Ascending aorta (tissue), 2 donors: ENCODE measurements at regions of chr20 and their contacts with region 1.

Region 1: GRCh38 chr20:44310664-44311639 is at the start of gene FITM2:
- DNase-seq: peak; percentile 89 to 99
- H3K4me3 ChIP-seq: peak within 1 kb of the TSS; percentile 85 to 100
- H3K27ac ChIP-seq: peak within 1 kb of the TSS; percentile 50 to 68
- H3K4me1 ChIP-seq: peaks cover 4 to 9% of the 10 kb centered on the region in 2 donors
- H3K27me3 ChIP-seq: no peaks in the 10 kb centered on the region
- CTCF ChIP-seq: peak; percentile 87 to 98 (median 96)
- total RNA-seq, gene FITM2: 5.3 TPM

Region 2: GRCh38 chr20:43456809-43457639 is 853.9 kb before region 1 on chr20:
- intact Hi-C with region 1: loop called (anchors 5 kb)
- DNase-seq: peak; percentile 78 to 96
- H3K4me3 ChIP-seq: peak overlapping the region; percentile 90 to 91
- H3K27ac ChIP-seq: peak overlapping the region; percentile 99 to 100
- H3K4me1 ChIP-seq: peaks cover 4 to 17% of the 10 kb centered on the region in 2 donors
- H3K27me3 ChIP-seq: no peaks in the 10 kb centered on the region
- CTCF ChIP-seq: no peak

Region 3: GRCh38 chr20:44115762-44116644 is 194.9 kb before region 1 on chr20:
- intact Hi-C with region 1: loop called (anchors 2 kb)
- DNase-seq: peak in 1 of 2 donors; percentile 58
- H3K4me3 ChIP-seq: no peak overlapping the region
- H3K27ac ChIP-seq: peak overlapping the region in 1 of 2 donors; percentile 14
- H3K4me1 ChIP-seq: peaks cover 5 to 13% of the 10 kb centered on the region in 2 donors
- H3K27me3 ChIP-seq: no peaks in the 10 kb centered on the region
- CTCF ChIP-seq: no peak

Region 4: DNA sequence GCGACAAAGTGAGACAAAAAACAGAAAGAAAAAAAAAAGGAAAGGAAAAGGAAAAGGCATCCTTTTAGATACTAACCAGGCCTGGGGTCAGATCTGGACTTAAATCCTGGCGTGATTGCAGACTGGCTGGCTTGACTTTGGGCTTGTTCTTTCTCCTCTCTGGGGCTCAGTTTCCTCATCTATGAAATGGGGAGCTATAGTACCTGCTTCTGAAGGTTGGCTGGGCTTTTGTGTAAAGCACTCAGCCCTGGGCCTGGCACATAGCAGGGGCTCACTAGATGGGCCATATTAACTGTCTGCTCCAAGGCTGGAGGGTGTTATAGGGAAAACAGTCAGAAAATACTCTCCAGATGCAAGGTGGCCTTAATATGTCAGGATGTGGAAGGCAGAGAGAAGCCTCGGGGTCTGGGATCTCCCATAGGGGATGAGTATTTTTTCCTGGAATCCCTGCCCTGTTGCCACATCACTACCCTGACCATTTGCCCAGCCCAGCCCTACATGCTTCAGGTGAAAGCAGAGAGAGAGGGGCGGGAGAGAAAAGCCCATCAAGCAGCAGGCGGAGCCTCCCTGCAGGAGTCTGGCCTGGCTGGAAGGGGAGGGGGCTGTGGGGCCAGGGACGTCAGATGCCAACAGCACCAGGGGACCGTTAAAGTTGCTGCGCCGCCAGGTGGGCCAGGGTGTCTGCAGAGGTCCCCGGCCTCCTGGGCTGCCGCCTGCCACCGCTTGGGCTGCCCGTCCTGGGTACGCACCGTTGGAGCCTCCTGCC is 24.9 kb after region 1 on chr20:
- intact Hi-C with region 1: no loop called
- DNase-seq: no peak
- H3K4me3 ChIP-seq: no peak overlapping the region
- H3K27ac ChIP-seq: no peak overlapping the region
- H3K4me1 ChIP-seq: no peaks in the 10 kb centered on the region
- H3K27me3 ChIP-seq: no peaks in the 10 kb centered on the region
- CTCF ChIP-seq: no peak

Region 5: GRCh38 chr20:44609511-44610312 is 298.8 kb after region 1 on chr20:
- intact Hi-C with region 1: loop called (anchors 10 kb)
- DNase-seq: peak in 1 of 2 donors; percentile 95
- H3K4me3 ChIP-seq: peak overlapping the region; percentile 15 to 51
- H3K27ac ChIP-seq: peak overlapping the region; percentile 83 to 88
- H3K4me1 ChIP-seq: peaks cover 5 to 20% of the 10 kb centered on the region in 2 donors
- H3K27me3 ChIP-seq: no peaks in the 10 kb centered on the region
- CTCF ChIP-seq: peak; percentile 98

Region 6: DNA sequence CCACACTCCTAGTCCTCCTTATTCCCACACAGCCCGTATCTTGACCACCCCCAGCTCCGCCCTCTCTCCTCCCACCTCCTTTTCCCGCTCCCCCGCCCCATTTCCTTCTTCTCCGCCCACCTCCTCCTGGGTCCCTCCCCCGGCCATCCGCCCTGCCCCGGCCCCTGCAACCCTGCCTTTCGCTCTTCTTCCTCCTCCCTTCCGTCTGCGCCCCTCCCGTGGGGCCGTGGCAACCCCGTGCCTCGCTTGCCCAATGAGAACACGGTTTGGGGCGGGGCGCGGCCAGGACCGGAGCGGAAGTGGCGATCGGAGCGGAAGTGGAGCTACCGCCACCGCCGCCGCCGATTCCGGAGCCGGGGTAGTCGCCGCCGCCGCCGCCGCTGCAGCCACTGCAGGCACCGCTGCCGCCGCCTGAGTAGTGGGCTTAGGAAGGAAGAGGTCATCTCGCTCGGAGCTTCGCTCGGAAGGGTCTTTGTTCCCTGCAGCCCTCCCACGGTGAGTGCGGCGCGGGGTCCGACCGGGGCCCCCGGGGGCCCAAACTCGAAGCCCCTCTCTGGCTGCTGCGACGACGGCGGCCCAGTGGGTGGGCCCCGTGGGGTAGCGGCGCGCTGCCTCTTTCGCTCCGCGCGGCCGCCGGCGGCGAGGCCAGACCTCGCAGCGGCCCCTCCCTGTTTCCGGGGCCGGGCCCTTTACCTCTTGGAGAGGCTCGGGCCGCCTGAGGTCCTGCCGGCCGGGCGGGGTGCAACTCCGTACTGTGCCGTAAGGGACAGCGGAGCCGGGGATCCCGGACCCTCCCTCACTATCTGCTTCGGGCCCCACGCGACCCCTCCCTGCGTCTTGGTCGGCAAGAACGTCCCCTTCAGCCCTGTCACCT is 574.7 kb after region 1 on chr20 and contains the start of gene YWHAB:
- intact Hi-C with region 1: loop called (anchors 10 kb)
- DNase-seq: peak; percentile 96 to 99
- H3K4me3 ChIP-seq: peak within 1 kb of the TSS; percentile 78 to 91
- H3K27ac ChIP-seq: peak within 1 kb of the TSS; percentile 96 to 97
- H3K4me1 ChIP-seq: peaks cover 0 to 28% of the 10 kb centered on the region in 2 donors
- H3K27me3 ChIP-seq: no peaks in the 10 kb centered on the region
- CTCF ChIP-seq: no peak
- total RNA-seq, gene YWHAB: 50.4 TPM

Region 7: DNA sequence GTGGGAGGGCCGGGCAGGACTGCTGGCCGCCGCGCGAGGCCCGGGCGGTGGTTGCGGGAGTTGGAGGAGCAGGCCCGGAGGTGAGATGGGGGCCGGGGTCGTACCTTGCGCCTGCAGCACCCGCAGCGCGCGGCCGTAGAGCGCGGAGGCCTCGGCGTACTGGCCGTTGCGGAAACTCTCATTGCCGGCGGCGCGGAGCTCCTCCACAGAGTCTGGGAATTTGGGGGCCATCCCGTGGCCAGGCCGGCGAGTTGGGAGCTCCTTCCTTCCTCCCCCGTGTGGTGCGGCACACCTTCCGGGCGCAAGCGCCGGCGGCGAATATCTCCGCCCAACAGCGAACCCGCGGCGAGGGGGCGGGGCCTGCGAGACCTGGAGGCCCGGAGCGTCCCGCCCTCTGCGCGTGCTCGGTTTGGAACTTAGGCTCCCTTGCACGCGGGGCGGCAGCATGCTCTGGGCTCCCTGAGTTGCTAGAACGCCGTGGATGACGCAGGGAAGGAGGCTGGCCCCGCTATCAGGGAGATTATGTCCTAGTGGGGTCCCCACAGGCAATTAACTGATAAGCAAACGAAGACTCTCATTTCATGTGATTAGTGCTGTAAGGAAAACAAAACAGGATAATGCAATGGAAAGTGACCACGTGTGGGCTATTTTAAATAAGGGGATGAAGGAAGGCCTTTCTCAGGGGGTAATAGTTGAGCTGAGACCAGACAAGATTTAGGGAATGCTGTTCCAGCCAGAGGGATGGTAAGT is 649.3 kb after region 1 on chr20 and contains the start of gene TOMM34:
- intact Hi-C with region 1: loop called (anchors 5 kb)
- DNase-seq: peak; percentile 80 to 97
- H3K4me3 ChIP-seq: peak within 1 kb of the TSS; percentile 79 to 89
- H3K27ac ChIP-seq: peak within 1 kb of the TSS; percentile 79 to 87
- H3K4me1 ChIP-seq: peaks cover 0 to 11% of the 10 kb centered on the region in 2 donors
- H3K27me3 ChIP-seq: no peaks in the 10 kb centered on the region
- CTCF ChIP-seq: peak in 1 of 3 experiments; percentile 8
- total RNA-seq, gene TOMM34: 11.1 TPM